ENCODE measurements at regions of chr17 and their contacts with region 1.

Region 1: DNA sequence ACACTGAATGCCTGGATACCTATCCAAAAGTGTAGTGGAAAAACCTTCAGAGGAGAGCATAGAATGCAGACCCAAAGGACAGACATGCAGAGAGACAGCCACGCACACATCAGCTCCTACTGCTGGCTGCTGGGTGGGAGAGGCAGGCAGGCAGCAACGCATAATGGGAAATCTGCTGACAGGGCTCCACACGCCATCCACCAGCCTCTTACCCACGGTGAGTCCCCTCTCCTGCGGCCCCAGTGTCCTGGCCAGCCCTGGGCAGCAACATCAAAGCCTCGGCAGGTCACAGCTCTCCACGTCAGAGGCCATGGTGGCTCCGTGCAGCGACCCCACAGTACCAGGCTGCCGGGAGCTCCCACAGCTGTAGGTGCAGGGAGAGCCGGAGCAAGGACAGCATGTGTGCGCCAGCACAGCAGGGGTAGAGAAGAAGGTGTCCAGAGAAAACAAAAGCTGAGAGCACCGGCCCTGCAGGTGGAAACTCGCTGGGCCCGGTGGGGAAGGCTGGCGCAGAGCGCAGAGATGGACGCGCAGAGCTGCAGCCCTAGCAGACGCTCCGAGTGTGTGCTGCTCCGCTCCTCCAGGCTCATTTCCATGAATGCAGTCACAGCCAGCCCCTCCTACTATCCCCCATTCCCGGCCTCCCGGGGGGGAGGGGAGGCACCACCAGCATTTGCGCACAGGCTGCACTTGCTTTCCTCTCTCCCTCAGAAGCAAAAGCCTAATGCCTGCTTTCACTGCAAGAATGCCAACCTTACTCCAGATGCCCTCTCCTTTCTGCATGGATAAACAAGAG is 58.9 kb downstream of the CYTH1 start:
- DNase-seq: peak; percentile 55 to 74
- ATAC-seq: peak; percentile 68 to 88 (median 82)
- H3K4me3 ChIP-seq: peak overlapping the region; percentile 4 to 56 (median 40)
- H3K27ac ChIP-seq: peak overlapping the region; percentile 29 to 65 (median 50)
- H3K4me1 ChIP-seq: peaks cover 18 to 99% (median 76%) of the 10 kb centered on the region in 9 donors
- H3K27me3 ChIP-seq: no peaks in the 10 kb centered on the region
- CTCF ChIP-seq: no peak

Region 2: GRCh38 chr17:78645421-78646295 is 77.5 kb before region 1 on chr17:
- intact Hi-C with region 1: no loop called
- DNase-seq: peak; percentile 77 to 89
- ATAC-seq: peak; percentile 82 to 97 (median 95)
- H3K4me3 ChIP-seq: peak overlapping the region in 1 of 10 donors; percentile 15
- H3K27ac ChIP-seq: peak overlapping the region in 9 of 10 donors; percentile 57 to 90 (median 79)
- H3K4me1 ChIP-seq: peaks cover 0 to 39% (median 14%) of the 10 kb centered on the region in 9 donors
- H3K27me3 ChIP-seq: peaks cover 0 to 4% (median 0%) of the 10 kb centered on the region in 7 donors
- CTCF ChIP-seq: no peak

Region 3: GRCh38 chr17:78665952-78666920 is 57.0 kb before region 1 on chr17:
- intact Hi-C with region 1: no loop called
- DNase-seq: peak in 1 of 2 donors; percentile 67
- ATAC-seq: peak; percentile 59 to 82 (median 78)
- H3K4me3 ChIP-seq: no peak overlapping the region
- H3K27ac ChIP-seq: peak overlapping the region; percentile 2 to 93 (median 66)
- H3K4me1 ChIP-seq: peaks cover 0 to 33% (median 18%) of the 10 kb centered on the region in 9 donors
- H3K27me3 ChIP-seq: no peaks in the 10 kb centered on the region
- CTCF ChIP-seq: no peak

Region 4: GRCh38 chr17:78759203-78759968 is 36.2 kb after region 1 on chr17:
- intact Hi-C with region 1: no loop called
- DNase-seq: peak; percentile 70 to 72
- ATAC-seq: peak; percentile 63 to 88 (median 76)
- H3K4me3 ChIP-seq: peak overlapping the region in 1 of 10 donors; percentile 14
- H3K27ac ChIP-seq: peak overlapping the region in 6 of 10 donors; percentile 31 to 84 (median 48)
- H3K4me1 ChIP-seq: peaks cover 4 to 91% (median 46%) of the 10 kb centered on the region in 9 donors
- H3K27me3 ChIP-seq: no peaks in the 10 kb centered on the region
- CTCF ChIP-seq: no peak

Region 5: GRCh38 chr17:78781948-78782916 is 59.0 kb after region 1 on chr17 and contains the start of gene CYTH1:
- intact Hi-C with region 1: loop called in 3 of 10 experiments (anchors 5 kb)
- DNase-seq: peak; percentile 97 to 98
- ATAC-seq: peak; percentile 94 to 97 (median 96)
- H3K4me3 ChIP-seq: peak within 1 kb of the TSS; percentile 86 to 99 (median 96)
- H3K27ac ChIP-seq: peak within 1 kb of the TSS; percentile 87 to 99 (median 96)
- H3K4me1 ChIP-seq: peaks cover 0 to 54% (median 25%) of the 10 kb centered on the region in 9 donors
- H3K27me3 ChIP-seq: no peaks in the 10 kb centered on the region
- CTCF ChIP-seq: no peak
- total RNA-seq, gene CYTH1: 23.5 to 46.9 (median 34.8) TPM

Region 6: GRCh38 chr17:78970834-78971773 is 247.9 kb after region 1 on chr17:
- intact Hi-C with region 1: no loop called
- DNase-seq: peak; percentile 83 to 87
- ATAC-seq: peak; percentile 23 to 58 (median 46)
- H3K4me3 ChIP-seq: peak overlapping the region in 2 of 10 donors; percentile 6 to 19
- H3K27ac ChIP-seq: peak overlapping the region in 9 of 10 donors; percentile 23 to 68 (median 54)
- H3K4me1 ChIP-seq: peaks cover 3 to 52% (median 32%) of the 10 kb centered on the region in 9 donors
- H3K27me3 ChIP-seq: no peaks in the 10 kb centered on the region
- CTCF ChIP-seq: peak; percentile 82 to 94 (median 90)